ENCODE measurements at regions of chr6 and their contacts with region 1.

Region 1: DNA sequence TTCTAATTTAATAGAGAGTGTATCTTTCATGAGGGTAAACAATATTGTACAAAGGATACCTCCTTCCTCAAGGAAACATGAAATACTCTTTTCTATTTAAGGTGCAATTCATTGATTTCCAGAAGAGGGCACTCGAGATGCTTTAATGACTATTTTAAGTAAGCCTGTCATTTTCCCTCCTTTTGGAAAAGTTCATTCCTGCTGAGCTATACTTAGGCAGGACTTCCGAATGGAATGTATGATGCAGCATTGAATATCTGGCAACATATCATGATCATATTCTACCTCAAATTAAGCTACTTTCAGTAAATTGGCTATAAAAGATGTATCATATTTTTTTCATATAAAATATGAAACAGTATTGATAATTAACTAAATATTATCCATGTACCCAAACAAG is 5.0 kb downstream of the DST start:
- DNase-seq: peak in 2 of 4 experiments; percentile 9 to 55
- ATAC-seq: peak; percentile 61
- H3K4me3 ChIP-seq: no peak overlapping the region
- H3K27ac ChIP-seq: no peak overlapping the region
- H3K4me1 ChIP-seq: no peaks in the 10 kb centered on the region
- H3K27me3 ChIP-seq: no peaks in the 10 kb centered on the region
- CTCF ChIP-seq: peak; percentile 51 to 78 (median 54); a peak in 5 of 6 replicates
- EP300 ChIP-seq: no peak
- POLR2A ChIP-seq: no peak
- RAD21 ChIP-seq: peak; percentile 83 to 92

Region 2: GRCh38 chr6:56517155-56517745 is 120.4 kb before region 1 on chr6:
- CTCF ChIA-PET with region 1: no interaction called
- POLR2A ChIA-PET with region 1: no interaction called
- in situ Hi-C with region 1: no loop called
- intact Hi-C with region 1: no loop called
- DNase-seq: no peak
- ATAC-seq: no peak
- H3K4me3 ChIP-seq: no peak overlapping the region
- H3K27ac ChIP-seq: no peak overlapping the region
- H3K4me1 ChIP-seq: peaks cover 0 to 1% of the 10 kb centered on the region in 2 experiments; a peak in 1 of 5 replicates
- H3K27me3 ChIP-seq: no peaks in the 10 kb centered on the region
- CTCF ChIP-seq: no peak
- EP300 ChIP-seq: no peak
- POLR2A ChIP-seq: no peak
- RAD21 ChIP-seq: no peak

Region 3: DNA sequence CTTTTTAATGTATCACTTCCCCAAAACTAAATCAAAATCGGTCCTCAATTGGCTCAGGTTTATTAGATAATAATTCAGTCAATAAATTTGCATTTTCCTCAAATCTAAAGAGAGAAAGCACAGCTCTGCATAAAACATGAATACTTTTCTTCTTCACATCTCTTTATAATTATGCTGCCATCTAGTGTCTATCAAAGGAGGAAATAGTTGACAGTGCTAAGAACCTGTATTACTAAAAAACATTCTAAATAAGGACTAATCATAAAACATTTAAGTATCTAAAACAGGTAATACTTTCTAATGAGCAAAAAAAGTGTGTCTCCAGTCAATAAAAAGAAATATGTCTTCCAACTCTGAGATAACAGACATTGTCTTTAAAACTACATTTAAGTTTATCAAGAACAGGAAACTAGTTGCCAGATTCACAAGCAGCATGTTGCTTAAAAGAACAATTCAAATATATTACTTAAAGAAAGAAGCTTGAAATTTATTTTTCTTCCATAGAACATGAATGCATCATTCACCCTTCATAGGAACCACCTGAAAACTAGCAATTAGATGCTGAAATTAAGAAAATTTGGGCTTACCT is 61.5 kb after region 1 on chr6:
- CTCF ChIA-PET with region 1: interaction called, 33 read pairs
- POLR2A ChIA-PET with region 1: no interaction called
- in situ Hi-C with region 1: no loop called
- intact Hi-C with region 1: loop called (anchors 1 kb)
- DNase-seq: peak in 2 of 4 experiments; percentile 7 to 8
- ATAC-seq: peak; percentile 59; the same call in 2 of the 3 replicates
- H3K4me3 ChIP-seq: no peak overlapping the region
- H3K27ac ChIP-seq: no peak overlapping the region
- H3K4me1 ChIP-seq: no peaks in the 10 kb centered on the region
- H3K27me3 ChIP-seq: no peaks in the 10 kb centered on the region
- CTCF ChIP-seq: peak in 1 of 3 experiments; percentile 52; a peak in 2 of 6 replicates
- EP300 ChIP-seq: no peak
- POLR2A ChIP-seq: no peak
- RAD21 ChIP-seq: peak; percentile 62 to 64

Region 4: DNA sequence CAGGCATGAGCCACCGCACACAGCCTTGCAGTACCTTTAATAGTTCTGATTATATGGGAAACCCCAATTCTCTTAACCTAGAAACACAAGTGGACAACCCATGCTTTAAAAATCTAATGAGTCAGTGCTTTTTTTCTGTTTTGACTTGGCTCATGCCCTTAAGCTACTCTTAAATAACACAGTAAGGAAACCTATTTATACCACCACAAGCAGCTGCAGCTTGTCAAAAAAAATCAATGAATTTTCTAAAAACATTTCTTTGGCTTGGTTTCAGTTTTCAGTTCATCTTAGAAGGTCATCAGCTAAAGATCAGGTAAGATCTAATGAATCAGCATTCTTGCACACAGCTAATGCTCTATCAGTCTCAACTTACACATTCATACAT is 129.2 kb after region 1 on chr6:
- CTCF ChIA-PET with region 1: no interaction called
- POLR2A ChIA-PET with region 1: no interaction called
- in situ Hi-C with region 1: no loop called
- intact Hi-C with region 1: loop called (anchors 5 kb)
- DNase-seq: no peak
- ATAC-seq: no peak
- H3K4me3 ChIP-seq: no peak overlapping the region
- H3K27ac ChIP-seq: no peak overlapping the region
- H3K4me1 ChIP-seq: no peaks in the 10 kb centered on the region
- H3K27me3 ChIP-seq: no peaks in the 10 kb centered on the region; a peak in 1 of 5 replicates
- CTCF ChIP-seq: no peak
- EP300 ChIP-seq: no peak
- POLR2A ChIP-seq: no peak
- RAD21 ChIP-seq: no peak

Region 5: DNA sequence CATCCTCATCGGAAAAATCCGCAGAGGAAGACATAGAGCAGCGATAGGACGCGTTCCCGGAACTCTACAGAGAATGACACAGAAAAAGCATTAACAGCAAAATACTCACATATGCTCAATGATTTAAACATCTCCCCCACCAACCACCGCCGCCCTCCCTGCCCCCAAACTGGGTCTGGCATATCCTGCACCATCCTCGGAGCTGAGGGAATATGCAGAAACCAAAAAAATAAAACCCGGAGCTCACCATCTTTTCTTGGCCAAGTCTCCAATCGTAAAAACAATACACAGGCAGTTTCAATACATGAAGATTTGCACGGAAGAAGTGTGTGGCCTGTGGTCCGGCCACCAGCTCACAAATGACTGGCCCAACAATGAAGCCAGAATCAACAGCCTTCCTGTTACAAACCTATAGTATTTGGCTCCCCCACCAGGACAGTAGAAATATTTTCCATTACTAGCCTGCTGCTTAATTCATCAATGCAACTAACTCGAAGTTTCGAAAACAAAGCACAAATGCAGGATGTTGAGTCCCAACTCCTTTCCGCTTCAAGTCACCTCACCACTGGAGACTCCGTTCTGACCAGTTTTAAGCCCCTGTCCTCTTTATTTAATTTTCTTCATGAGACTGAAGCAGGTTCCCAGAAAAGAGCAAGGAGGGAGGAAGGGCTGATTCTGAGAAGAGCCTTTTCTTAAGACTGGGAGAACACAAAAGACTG is 214.1 kb after region 1 on chr6:
- CTCF ChIA-PET with region 1: interaction called, 11 read pairs
- POLR2A ChIA-PET with region 1: no interaction called
- in situ Hi-C with region 1: no loop called
- intact Hi-C with region 1: loop called (anchors 2 kb)
- DNase-seq: peak in 2 of 4 experiments; percentile 40 to 55
- ATAC-seq: peak; percentile 92
- H3K4me3 ChIP-seq: no peak overlapping the region
- H3K27ac ChIP-seq: no peak overlapping the region
- H3K4me1 ChIP-seq: no peaks in the 10 kb centered on the region; a peak in 1 of 5 replicates
- H3K27me3 ChIP-seq: no peaks in the 10 kb centered on the region
- CTCF ChIP-seq: peak; percentile 47 to 70 (median 59); a peak in 5 of 6 replicates
- EP300 ChIP-seq: no peak
- POLR2A ChIP-seq: no peak
- RAD21 ChIP-seq: peak; percentile 60 to 73

Measured in K562 (cell line).